CD4-positive, alpha-beta T cell (primary cell): ENCODE measurements at regions of chr12 and their contacts with region 1.

Region 1: DNA sequence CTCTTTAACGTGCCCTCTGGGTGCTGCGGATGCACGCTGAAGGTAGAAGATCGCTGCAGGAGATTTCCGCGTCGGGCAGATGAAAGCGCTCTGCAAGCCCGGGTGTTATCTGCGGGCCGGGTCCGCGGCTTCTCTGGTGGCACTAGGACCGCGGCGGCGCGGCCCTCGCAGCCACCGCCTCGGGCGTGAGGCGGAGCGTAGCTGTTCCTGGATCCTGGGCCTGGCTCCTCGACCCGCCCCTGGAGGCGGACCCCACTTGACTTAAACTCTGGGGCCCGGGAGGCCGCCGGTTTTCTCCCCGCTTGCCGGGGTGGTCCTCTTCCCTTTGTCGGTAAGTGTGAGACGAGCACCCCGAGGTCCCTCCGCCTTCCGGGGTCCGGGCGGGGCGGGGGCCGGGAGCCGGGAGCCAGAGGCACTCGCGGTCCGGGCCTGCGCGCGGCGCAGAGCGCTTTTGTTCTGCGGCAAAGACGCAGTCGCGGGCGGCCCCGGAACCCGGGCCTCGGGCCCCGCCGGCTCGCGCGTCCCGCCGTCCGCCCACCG is at the start of gene RESF1:
- DNase-seq: peak; percentile 72 to 96 (median 85)
- ATAC-seq: peak; percentile 73
- H3K4me3 ChIP-seq: peak within 1 kb of the TSS; percentile 84
- H3K4me3 Mint-ChIP-seq: peak within 1 kb of the TSS; percentile 99
- H3K27ac ChIP-seq: peak within 1 kb of the TSS; percentile 69 to 82
- H3K27ac Mint-ChIP-seq: peak within 1 kb of the TSS; percentile 96
- H3K4me1 ChIP-seq: peaks cover 46% of the 10 kb centered on the region
- H3K4me1 Mint-ChIP-seq: peaks cover 78% of the 10 kb centered on the region
- H3K27me3 ChIP-seq: no peaks in the 10 kb centered on the region
- H3K27me3 Mint-ChIP-seq: no peaks in the 10 kb centered on the region
- CTCF ChIP-seq: no peak
- total RNA-seq, gene RESF1: 113 to 124 TPM

Region 2: GRCh38 chr12:31297572-31298512 is 661.4 kb before region 1 on chr12:
- CTCF ChIA-PET with region 1: no interaction called
- POLR2A ChIA-PET with region 1: no interaction called
- intact Hi-C with region 1: no loop called
- DNase-seq: no peak
- ATAC-seq: no peak
- H3K4me3 ChIP-seq: no peak overlapping the region
- H3K4me3 Mint-ChIP-seq: no peak overlapping the region
- H3K27ac ChIP-seq: no peak overlapping the region
- H3K27ac Mint-ChIP-seq: peak overlapping the region; percentile 51
- H3K4me1 ChIP-seq: no peaks in the 10 kb centered on the region
- H3K4me1 Mint-ChIP-seq: peaks cover 36% of the 10 kb centered on the region
- H3K27me3 ChIP-seq: no peaks in the 10 kb centered on the region
- H3K27me3 Mint-ChIP-seq: no peaks in the 10 kb centered on the region
- CTCF ChIP-seq: no peak

Region 3: GRCh38 chr12:31728917-31729640 is 230.2 kb before region 1 on chr12 and contains the start of gene AMN1:
- CTCF ChIA-PET with region 1: interaction called, 6 read pairs
- POLR2A ChIA-PET with region 1: interaction called, 106 read pairs
- intact Hi-C with region 1: loop called (anchors 1 to 5 kb)
- DNase-seq: peak; percentile 95 to 99 (median 98)
- ATAC-seq: peak; percentile 88
- H3K4me3 ChIP-seq: peak within 1 kb of the TSS; percentile 81
- H3K4me3 Mint-ChIP-seq: peak within 1 kb of the TSS; percentile 93
- H3K27ac ChIP-seq: peak within 1 kb of the TSS; percentile 82 to 94
- H3K27ac Mint-ChIP-seq: peak within 1 kb of the TSS; percentile 97
- H3K4me1 ChIP-seq: peaks cover 40% of the 10 kb centered on the region
- H3K4me1 Mint-ChIP-seq: peaks cover 68% of the 10 kb centered on the region
- H3K27me3 ChIP-seq: no peaks in the 10 kb centered on the region
- H3K27me3 Mint-ChIP-seq: no peaks in the 10 kb centered on the region
- CTCF ChIP-seq: peak; percentile 21
- total RNA-seq, gene AMN1: 6.9 to 8.5 TPM

Region 4: GRCh38 chr12:31890295-31891285 is 68.6 kb before region 1 on chr12:
- CTCF ChIA-PET with region 1: interaction called, 6 read pairs
- POLR2A ChIA-PET with region 1: interaction called, 99 read pairs
- intact Hi-C with region 1: loop called in 1 of 2 experiments (anchors 5 kb)
- DNase-seq: peak in 4 of 14 experiments; percentile 30 to 89 (median 67)
- ATAC-seq: peak; percentile 92
- H3K4me3 ChIP-seq: no peak overlapping the region
- H3K4me3 Mint-ChIP-seq: peak overlapping the region; percentile 60
- H3K27ac ChIP-seq: peak overlapping the region; percentile 55 to 68
- H3K27ac Mint-ChIP-seq: peak overlapping the region; percentile 89
- H3K4me1 ChIP-seq: peaks cover 81% of the 10 kb centered on the region
- H3K4me1 Mint-ChIP-seq: peaks cover 63% of the 10 kb centered on the region
- H3K27me3 ChIP-seq: no peaks in the 10 kb centered on the region
- H3K27me3 Mint-ChIP-seq: no peaks in the 10 kb centered on the region
- CTCF ChIP-seq: no peak

Region 5: GRCh38 chr12:32002848-32003493 is 43.7 kb after region 1 on chr12:
- CTCF ChIA-PET with region 1: interaction called, 3 read pairs
- POLR2A ChIA-PET with region 1: interaction called, 21 read pairs
- intact Hi-C with region 1: loop called in 1 of 2 experiments (anchors 5 kb)
- DNase-seq: no peak
- ATAC-seq: no peak
- H3K4me3 ChIP-seq: no peak overlapping the region
- H3K4me3 Mint-ChIP-seq: no peak overlapping the region
- H3K27ac ChIP-seq: peak overlapping the region in 1 of 2 donors; percentile 38
- H3K27ac Mint-ChIP-seq: peak overlapping the region; percentile 65
- H3K4me1 ChIP-seq: no peaks in the 10 kb centered on the region
- H3K4me1 Mint-ChIP-seq: peaks cover 9% of the 10 kb centered on the region
- H3K27me3 ChIP-seq: no peaks in the 10 kb centered on the region
- H3K27me3 Mint-ChIP-seq: no peaks in the 10 kb centered on the region
- CTCF ChIP-seq: no peak

Region 6: DNA sequence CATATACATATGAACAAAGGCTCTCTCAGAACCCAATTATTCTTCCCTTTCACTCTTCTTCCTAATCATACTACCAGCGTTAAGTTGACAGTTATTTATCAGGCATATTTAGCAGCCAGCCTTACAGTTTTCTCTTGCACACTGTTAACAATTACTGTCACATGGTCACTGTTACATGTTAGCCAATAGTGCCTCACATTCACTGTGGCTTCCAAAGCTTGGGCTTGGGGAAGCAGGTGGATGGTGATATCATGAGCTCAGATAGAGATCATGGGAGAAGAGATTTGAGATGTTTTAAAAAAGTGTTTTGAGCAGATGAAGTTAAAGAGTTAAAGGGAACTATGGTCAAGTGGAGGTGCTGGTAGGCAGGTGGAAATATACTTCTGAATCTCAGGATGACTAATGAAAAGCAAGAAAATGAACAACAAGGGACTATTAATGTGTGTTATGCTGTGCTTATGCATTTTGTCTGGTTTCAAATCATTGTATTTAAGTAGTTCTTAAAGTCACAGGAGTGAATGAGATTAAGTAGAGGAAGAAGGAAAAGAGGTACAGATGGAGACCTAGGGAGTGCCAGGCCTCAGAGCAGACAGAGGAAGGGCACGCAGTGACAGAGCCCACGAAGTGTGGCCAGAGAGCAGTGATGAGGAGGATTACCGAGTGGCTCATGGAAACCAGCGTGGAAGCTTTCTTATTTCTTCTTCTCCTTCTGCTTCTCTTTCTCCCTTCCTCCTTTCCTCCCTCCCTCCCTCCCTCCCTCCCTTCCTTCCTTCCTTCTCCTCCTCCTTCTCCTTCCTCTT is 187.0 kb after region 1 on chr12:
- CTCF ChIA-PET with region 1: no interaction called
- POLR2A ChIA-PET with region 1: no interaction called
- intact Hi-C with region 1: no loop called
- DNase-seq: no peak
- ATAC-seq: no peak
- H3K4me3 ChIP-seq: no peak overlapping the region
- H3K4me3 Mint-ChIP-seq: no peak overlapping the region
- H3K27ac ChIP-seq: no peak overlapping the region
- H3K27ac Mint-ChIP-seq: no peak overlapping the region
- H3K4me1 ChIP-seq: no peaks in the 10 kb centered on the region
- H3K4me1 Mint-ChIP-seq: peaks cover 5% of the 10 kb centered on the region
- H3K27me3 ChIP-seq: no peaks in the 10 kb centered on the region
- H3K27me3 Mint-ChIP-seq: no peaks in the 10 kb centered on the region
- CTCF ChIP-seq: no peak

Region 7: GRCh38 chr12:32302218-32303173 is 343.3 kb after region 1 on chr12:
- CTCF ChIA-PET with region 1: no interaction called
- POLR2A ChIA-PET with region 1: no interaction called
- intact Hi-C with region 1: loop called in 1 of 2 experiments (anchors 10 kb)
- DNase-seq: peak in 5 of 14 experiments; percentile 3 to 51 (median 11)
- ATAC-seq: no peak
- H3K4me3 ChIP-seq: no peak overlapping the region
- H3K4me3 Mint-ChIP-seq: no peak overlapping the region
- H3K27ac ChIP-seq: no peak overlapping the region
- H3K27ac Mint-ChIP-seq: no peak overlapping the region
- H3K4me1 ChIP-seq: no peaks in the 10 kb centered on the region
- H3K4me1 Mint-ChIP-seq: peaks cover 10% of the 10 kb centered on the region
- H3K27me3 ChIP-seq: no peaks in the 10 kb centered on the region
- H3K27me3 Mint-ChIP-seq: no peaks in the 10 kb centered on the region
- CTCF ChIP-seq: peak; percentile 31